CD4-positive, alpha-beta T cell (primary cell): ENCODE measurements at regions of chr1 and their contacts with region 1.

Region 1: GRCh38 chr1:151156515-151156819 is at the start of gene TNFAIP8L2:
- DNase-seq: peak; percentile 56 to 89 (median 75)
- ATAC-seq: peak; percentile 81
- H3K4me3 ChIP-seq: peak within 1 kb of the TSS; percentile 77
- H3K4me3 Mint-ChIP-seq: peak within 1 kb of the TSS; percentile 99
- H3K27ac ChIP-seq: peak within 1 kb of the TSS; percentile 56 to 70
- H3K27ac Mint-ChIP-seq: peak within 1 kb of the TSS; percentile 85
- H3K4me1 ChIP-seq: peaks cover 53% of the 10 kb centered on the region
- H3K4me1 Mint-ChIP-seq: peaks cover 57% of the 10 kb centered on the region
- H3K27me3 ChIP-seq: no peaks in the 10 kb centered on the region
- H3K27me3 Mint-ChIP-seq: no peaks in the 10 kb centered on the region
- CTCF ChIP-seq: no peak
- total RNA-seq, gene TNFAIP8L2: 0.70 to 0.74 TPM

Region 2: GRCh38 chr1:150464422-150464826 is 692.0 kb before region 1 on chr1:
- CTCF ChIA-PET with region 1: no interaction called
- POLR2A ChIA-PET with region 1: no interaction called
- intact Hi-C with region 1: loop called in 1 of 2 experiments (anchors 10 kb)
- DNase-seq: peak; percentile 45 to 85 (median 63)
- ATAC-seq: peak; percentile 94
- H3K4me3 ChIP-seq: no peak overlapping the region
- H3K4me3 Mint-ChIP-seq: no peak overlapping the region
- H3K27ac ChIP-seq: no peak overlapping the region
- H3K27ac Mint-ChIP-seq: peak overlapping the region; percentile 7
- H3K4me1 ChIP-seq: no peaks in the 10 kb centered on the region
- H3K4me1 Mint-ChIP-seq: peaks cover 5% of the 10 kb centered on the region
- H3K27me3 ChIP-seq: no peaks in the 10 kb centered on the region
- H3K27me3 Mint-ChIP-seq: no peaks in the 10 kb centered on the region
- CTCF ChIP-seq: peak; percentile 79

Region 3: DNA sequence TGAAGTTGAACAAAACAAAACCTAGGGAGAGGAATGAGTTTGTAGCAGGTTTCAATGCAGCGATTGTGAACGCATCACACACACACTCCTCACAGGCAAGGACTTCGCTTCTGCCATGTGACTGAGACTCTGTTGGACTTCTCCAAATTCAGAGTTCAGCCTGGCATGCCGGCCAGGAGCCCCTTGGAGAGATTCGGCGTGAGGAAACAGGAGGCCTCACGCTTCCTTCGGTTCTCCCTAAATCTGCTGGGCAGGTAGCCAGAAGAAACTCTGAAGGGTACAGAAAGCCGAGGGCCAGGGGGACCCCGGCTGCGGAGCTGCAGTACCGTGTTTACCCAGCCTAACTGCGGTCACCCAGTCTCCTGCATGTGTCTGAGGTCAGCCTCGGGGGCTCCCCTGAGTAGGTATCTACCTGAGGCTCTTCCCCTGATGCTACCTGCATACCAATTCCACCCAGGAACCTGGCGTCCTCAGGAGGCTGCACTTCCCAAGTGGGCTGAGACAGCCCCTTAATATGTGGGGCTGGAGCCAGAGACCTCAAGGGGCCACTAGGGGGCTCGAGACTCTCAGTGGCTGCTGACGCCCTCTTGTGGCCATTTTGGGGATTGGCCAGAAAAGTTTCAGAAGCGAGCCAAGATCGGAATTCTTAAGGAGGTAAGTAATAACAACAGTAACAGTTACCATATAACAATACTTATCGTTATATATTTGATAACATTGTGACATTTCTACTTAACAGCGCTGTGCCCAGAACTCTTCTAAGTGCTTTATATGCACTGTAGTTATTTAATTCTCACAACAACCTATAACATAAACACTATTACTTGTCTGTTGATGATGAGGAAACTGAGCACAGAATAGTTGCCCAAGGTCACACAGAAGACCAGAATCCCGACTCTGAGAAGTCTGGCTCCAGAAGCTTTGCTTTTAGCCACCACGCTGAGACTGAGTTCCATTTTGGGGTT is 177.1 kb before region 1 on chr1:
- CTCF ChIA-PET with region 1: no interaction called
- POLR2A ChIA-PET with region 1: no interaction called
- intact Hi-C with region 1: loop called (anchors 2 kb)
- DNase-seq: peak; percentile 81 to 94 (median 88)
- ATAC-seq: peak; percentile 55
- H3K4me3 ChIP-seq: peak overlapping the region; percentile 41
- H3K4me3 Mint-ChIP-seq: peak overlapping the region; percentile 75
- H3K27ac ChIP-seq: no peak overlapping the region
- H3K27ac Mint-ChIP-seq: peak overlapping the region; percentile 59
- H3K4me1 ChIP-seq: peaks cover 45% of the 10 kb centered on the region
- H3K4me1 Mint-ChIP-seq: peaks cover 40% of the 10 kb centered on the region
- H3K27me3 ChIP-seq: no peaks in the 10 kb centered on the region
- H3K27me3 Mint-ChIP-seq: no peaks in the 10 kb centered on the region
- CTCF ChIP-seq: peak; percentile 100

Region 4: DNA sequence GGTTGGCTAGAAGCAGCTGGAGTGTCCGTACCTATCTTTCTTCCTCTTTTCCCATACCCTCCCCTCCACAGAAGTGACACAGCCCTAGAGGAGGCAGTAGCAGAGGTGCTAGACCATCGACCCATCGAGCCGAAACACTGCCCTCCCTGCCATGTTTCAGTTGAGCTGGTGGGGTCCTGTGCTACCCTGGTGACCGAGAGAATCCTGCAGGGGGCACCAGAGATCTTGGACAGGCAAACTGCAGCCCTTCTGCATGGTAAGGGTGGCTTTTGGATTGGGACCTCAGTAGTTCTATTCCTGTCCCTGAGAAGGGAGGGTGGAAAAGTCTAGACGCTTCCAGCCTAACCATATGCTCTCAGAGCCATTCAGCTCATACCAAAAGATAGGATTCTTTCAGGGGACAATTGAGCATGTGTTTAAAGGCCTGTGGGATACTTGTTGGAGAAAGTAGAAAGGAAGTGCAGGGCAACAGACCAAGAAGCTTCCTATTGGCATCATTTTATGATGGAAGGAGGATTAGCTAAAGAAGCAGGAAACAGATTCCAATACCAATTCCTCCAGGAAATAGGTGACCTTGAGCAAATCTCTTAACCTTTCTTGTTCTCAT is 131.8 kb before region 1 on chr1:
- CTCF ChIA-PET with region 1: interaction called, 49 read pairs
- POLR2A ChIA-PET with region 1: interaction called, 8 read pairs
- intact Hi-C with region 1: loop called (anchors 1 kb)
- DNase-seq: peak; percentile 81 to 95 (median 88)
- ATAC-seq: peak; percentile 100
- H3K4me3 ChIP-seq: no peak overlapping the region
- H3K4me3 Mint-ChIP-seq: no peak overlapping the region
- H3K27ac ChIP-seq: no peak overlapping the region
- H3K27ac Mint-ChIP-seq: peak overlapping the region; percentile 52
- H3K4me1 ChIP-seq: peaks cover 7% of the 10 kb centered on the region
- H3K4me1 Mint-ChIP-seq: peaks cover 6% of the 10 kb centered on the region
- H3K27me3 ChIP-seq: no peaks in the 10 kb centered on the region
- H3K27me3 Mint-ChIP-seq: no peaks in the 10 kb centered on the region
- CTCF ChIP-seq: peak; percentile 83

Region 5: DNA sequence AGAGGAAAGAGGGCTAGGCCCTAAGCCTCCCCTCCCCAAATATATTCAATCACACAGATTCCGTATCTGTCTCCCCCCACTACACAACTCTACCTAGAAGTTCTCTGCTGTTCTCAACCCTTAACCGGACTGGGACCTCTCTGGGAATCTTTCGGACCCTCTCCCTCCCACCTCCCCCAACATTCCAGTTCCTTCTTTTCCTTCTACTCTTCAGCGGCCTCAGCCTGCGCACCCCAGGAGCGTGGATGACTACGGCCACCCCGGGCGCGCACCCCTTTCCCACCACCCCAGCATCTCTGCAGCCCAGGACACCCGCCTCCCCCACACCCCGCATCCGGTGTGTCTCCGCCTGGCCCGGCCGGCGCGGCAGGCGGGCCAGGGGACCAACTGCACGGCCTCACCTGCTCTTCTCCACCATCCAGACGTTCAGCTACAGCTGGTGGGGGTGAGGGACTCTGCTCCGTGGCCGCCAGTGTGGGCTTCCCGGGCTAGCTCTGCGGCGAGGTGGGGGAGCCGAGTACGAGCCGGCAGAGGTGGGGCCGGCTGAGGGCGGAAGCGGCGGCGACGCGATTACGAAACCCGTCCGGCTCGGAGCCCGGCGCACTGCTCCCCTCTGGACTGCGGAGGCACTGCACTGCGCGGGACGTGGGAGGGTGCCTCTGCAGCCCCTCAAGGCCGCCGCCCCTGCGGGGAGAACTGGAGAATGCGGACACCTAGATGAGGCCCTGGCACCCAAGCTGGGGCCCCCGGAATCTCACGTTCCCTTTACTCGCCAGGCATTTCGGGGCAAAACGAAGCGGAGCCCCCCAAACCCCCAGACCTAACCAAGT is 97.2 kb before region 1 on chr1 and contains the start of gene CDC42SE1:
- CTCF ChIA-PET with region 1: no interaction called
- POLR2A ChIA-PET with region 1: interaction called, 34 read pairs
- intact Hi-C with region 1: no loop called
- DNase-seq: peak; percentile 71 to 94 (median 80)
- ATAC-seq: peak; percentile 76
- H3K4me3 ChIP-seq: peak within 1 kb of the TSS; percentile 64
- H3K4me3 Mint-ChIP-seq: peak within 1 kb of the TSS; percentile 97
- H3K27ac ChIP-seq: peak within 1 kb of the TSS; percentile 88 to 93
- H3K27ac Mint-ChIP-seq: peak within 1 kb of the TSS; percentile 90
- H3K4me1 ChIP-seq: peaks cover 42% of the 10 kb centered on the region
- H3K4me1 Mint-ChIP-seq: peaks cover 56% of the 10 kb centered on the region
- H3K27me3 ChIP-seq: no peaks in the 10 kb centered on the region
- H3K27me3 Mint-ChIP-seq: no peaks in the 10 kb centered on the region
- CTCF ChIP-seq: peak; percentile 81
- total RNA-seq, gene CDC42SE1: 401 to 404 TPM

Region 6: DNA sequence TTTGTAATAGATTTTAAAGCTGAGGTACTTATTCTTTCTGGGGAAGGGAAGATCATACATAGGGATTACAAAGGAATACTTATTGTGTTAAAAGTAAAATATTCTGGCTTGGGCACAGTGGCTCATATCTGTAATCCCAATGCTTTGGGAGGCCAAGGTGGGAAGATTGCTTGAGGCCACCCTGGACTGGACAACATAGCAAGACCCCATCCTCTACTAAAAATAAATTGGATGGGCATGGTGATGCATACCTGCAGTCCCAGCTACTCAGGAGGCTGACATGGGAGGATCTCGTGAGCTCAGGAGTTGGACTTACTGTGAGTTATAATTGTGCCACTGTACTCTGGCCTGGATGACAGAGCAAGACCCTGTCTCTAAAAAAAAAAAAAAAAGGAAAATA is 58.3 kb before region 1 on chr1:
- CTCF ChIA-PET with region 1: interaction called, 61 read pairs
- POLR2A ChIA-PET with region 1: interaction called, 64 read pairs
- intact Hi-C with region 1: loop called (anchors 1 kb)
- DNase-seq: no peak
- ATAC-seq: no peak
- H3K4me3 ChIP-seq: no peak overlapping the region
- H3K4me3 Mint-ChIP-seq: no peak overlapping the region
- H3K27ac ChIP-seq: no peak overlapping the region
- H3K27ac Mint-ChIP-seq: no peak overlapping the region
- H3K4me1 ChIP-seq: no peaks in the 10 kb centered on the region
- H3K4me1 Mint-ChIP-seq: no peaks in the 10 kb centered on the region
- H3K27me3 ChIP-seq: no peaks in the 10 kb centered on the region
- H3K27me3 Mint-ChIP-seq: no peaks in the 10 kb centered on the region
- CTCF ChIP-seq: no peak

Region 7: DNA sequence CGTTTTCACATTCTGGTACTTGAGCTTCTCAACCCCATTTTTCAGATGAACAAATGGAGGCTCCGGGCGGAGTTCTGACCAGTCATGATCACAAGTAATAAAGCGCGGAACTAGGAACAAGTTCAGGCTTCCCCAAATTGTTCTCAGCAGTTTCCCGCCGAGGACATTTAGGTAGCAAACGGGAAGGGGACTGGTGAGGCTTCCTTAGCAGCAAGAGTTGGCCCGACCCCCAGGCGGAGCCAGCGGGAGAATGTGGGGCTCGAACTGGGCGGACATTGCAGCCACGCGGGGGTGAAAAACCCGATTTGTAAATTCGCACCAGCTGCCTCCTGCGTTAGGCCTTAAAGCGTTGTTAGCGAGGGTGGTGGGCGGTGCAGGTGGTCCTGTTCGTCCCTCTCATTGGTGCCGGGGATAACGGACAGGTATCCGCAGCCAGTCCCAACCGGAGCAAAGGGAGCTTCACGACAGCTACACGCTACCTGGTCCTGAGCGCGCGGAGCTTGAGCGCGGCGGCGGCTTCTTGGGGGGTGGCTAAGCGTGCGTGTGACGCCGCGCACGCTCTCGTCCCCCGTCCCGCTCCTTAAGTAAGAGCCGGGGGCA is 25.4 kb before region 1 on chr1:
- CTCF ChIA-PET with region 1: interaction called, 3 read pairs
- POLR2A ChIA-PET with region 1: interaction called, 40 read pairs
- intact Hi-C with region 1: no loop called
- DNase-seq: peak; percentile 58 to 88 (median 76)
- ATAC-seq: peak; percentile 100
- H3K4me3 ChIP-seq: peak overlapping the region; percentile 48
- H3K4me3 Mint-ChIP-seq: peak overlapping the region; percentile 86
- H3K27ac ChIP-seq: peak overlapping the region in 1 of 2 donors; percentile 10
- H3K27ac Mint-ChIP-seq: peak overlapping the region; percentile 88
- H3K4me1 ChIP-seq: peaks cover 16% of the 10 kb centered on the region
- H3K4me1 Mint-ChIP-seq: peaks cover 15% of the 10 kb centered on the region
- H3K27me3 ChIP-seq: peaks cover 0 to 9% of the 10 kb centered on the region in 2 experiments
- H3K27me3 Mint-ChIP-seq: no peaks in the 10 kb centered on the region
- CTCF ChIP-seq: no peak

Region 8: DNA sequence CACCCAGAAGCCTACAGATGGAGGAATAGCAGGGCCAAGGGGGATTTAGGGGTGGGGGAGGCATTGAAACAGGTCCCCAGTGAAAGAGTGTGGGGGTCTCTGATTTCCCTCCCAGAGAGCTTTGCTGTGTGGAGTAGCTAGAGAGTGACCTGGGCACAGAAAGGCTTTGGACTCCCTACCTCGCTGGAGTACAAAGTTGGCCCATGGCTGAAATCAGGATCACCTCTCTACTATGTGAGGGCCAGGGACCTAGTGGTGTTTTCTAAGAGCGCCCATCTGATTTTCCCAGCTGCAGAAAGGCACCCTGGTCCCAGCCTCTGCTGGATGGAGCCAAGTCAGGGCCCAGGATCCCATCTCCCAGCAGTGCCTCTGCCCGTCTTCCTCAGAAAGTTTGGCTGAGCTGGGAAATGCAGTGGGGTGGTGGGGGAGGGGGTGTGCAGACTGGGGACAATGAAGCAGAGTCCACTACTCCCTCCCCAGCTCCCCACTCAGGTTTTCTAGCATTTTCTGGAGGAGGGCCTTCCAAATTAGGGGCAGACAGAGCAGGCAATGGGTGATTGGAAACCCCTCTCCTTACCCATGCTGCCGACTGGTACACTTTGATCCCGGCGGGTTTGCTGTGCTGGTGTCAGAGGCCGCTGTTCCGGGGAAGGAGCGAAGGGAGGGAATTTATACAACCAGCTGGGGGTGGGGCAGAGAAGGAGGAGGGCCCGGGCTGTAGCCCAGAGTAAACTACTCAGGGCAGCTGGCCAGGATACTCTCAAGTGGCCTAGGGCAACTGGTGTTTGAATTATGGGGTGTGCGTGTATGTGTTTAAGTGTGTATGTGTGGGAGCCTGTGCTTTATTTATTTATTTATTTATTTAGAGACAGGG is 215.8 kb after region 1 on chr1 and contains the start of gene SELENBP1:
- CTCF ChIA-PET with region 1: no interaction called
- POLR2A ChIA-PET with region 1: no interaction called
- intact Hi-C with region 1: no loop called
- DNase-seq: no peak
- ATAC-seq: no peak
- H3K4me3 ChIP-seq: no peak within 1 kb of the TSS
- H3K4me3 Mint-ChIP-seq: no peak within 1 kb of the TSS
- H3K27ac ChIP-seq: no peak within 1 kb of the TSS
- H3K27ac Mint-ChIP-seq: no peak within 1 kb of the TSS
- H3K4me1 ChIP-seq: no peaks in the 10 kb centered on the region
- H3K4me1 Mint-ChIP-seq: no peaks in the 10 kb centered on the region
- H3K27me3 ChIP-seq: no peaks in the 10 kb centered on the region
- H3K27me3 Mint-ChIP-seq: no peaks in the 10 kb centered on the region
- CTCF ChIP-seq: no peak
- total RNA-seq, gene SELENBP1: not detected